CD14-positive monocyte (primary cell): ENCODE measurements at regions of chr1 and their contacts with region 1.

Region 1: GRCh38 chr1:15409388-15410222 is at the start of gene EFHD2:
- DNase-seq: peak; percentile 93 to 99 (median 97)
- H3K4me3 ChIP-seq: peak within 1 kb of the TSS; percentile 92 to 100 (median 98)
- H3K4me3 Mint-ChIP-seq: peak within 1 kb of the TSS; percentile 97
- H3K27ac ChIP-seq: peak within 1 kb of the TSS; percentile 95
- H3K27ac Mint-ChIP-seq: peak within 1 kb of the TSS; percentile 97 to 99 (median 99)
- H3K4me1 ChIP-seq: peaks cover 31 to 33% of the 10 kb centered on the region in 2 donors
- H3K4me1 Mint-ChIP-seq: peaks cover 36% of the 10 kb centered on the region
- H3K27me3 ChIP-seq: peaks cover 0 to 16% of the 10 kb centered on the region in 2 donors
- H3K27me3 Mint-ChIP-seq: peaks cover 8 to 21% (median 18%) of the 10 kb centered on the region in 3 donors
- CTCF ChIP-seq: no peak
- polyA plus RNA-seq, gene EFHD2: 314 to 329 (median 323) TPM

Region 2: GRCh38 chr1:15345711-15346355 is 63.8 kb before region 1 on chr1:
- intact Hi-C with region 1: loop called in 1 of 2 experiments (anchors 5 kb)
- DNase-seq: peak; percentile 92 to 95 (median 95)
- H3K4me3 ChIP-seq: peak overlapping the region in 1 of 3 experiments; percentile 61
- H3K4me3 Mint-ChIP-seq: peak overlapping the region; percentile 48 to 85
- H3K27ac ChIP-seq: peak overlapping the region; percentile 68 to 80
- H3K27ac Mint-ChIP-seq: peak overlapping the region; percentile 87 to 94 (median 93)
- H3K4me1 ChIP-seq: peaks cover 63 to 66% of the 10 kb centered on the region in 2 donors
- H3K4me1 Mint-ChIP-seq: peaks cover 62% of the 10 kb centered on the region
- H3K27me3 ChIP-seq: no peaks in the 10 kb centered on the region
- H3K27me3 Mint-ChIP-seq: peaks cover 2 to 17% (median 4%) of the 10 kb centered on the region in 3 donors
- CTCF ChIP-seq: no peak

Region 3: DNA sequence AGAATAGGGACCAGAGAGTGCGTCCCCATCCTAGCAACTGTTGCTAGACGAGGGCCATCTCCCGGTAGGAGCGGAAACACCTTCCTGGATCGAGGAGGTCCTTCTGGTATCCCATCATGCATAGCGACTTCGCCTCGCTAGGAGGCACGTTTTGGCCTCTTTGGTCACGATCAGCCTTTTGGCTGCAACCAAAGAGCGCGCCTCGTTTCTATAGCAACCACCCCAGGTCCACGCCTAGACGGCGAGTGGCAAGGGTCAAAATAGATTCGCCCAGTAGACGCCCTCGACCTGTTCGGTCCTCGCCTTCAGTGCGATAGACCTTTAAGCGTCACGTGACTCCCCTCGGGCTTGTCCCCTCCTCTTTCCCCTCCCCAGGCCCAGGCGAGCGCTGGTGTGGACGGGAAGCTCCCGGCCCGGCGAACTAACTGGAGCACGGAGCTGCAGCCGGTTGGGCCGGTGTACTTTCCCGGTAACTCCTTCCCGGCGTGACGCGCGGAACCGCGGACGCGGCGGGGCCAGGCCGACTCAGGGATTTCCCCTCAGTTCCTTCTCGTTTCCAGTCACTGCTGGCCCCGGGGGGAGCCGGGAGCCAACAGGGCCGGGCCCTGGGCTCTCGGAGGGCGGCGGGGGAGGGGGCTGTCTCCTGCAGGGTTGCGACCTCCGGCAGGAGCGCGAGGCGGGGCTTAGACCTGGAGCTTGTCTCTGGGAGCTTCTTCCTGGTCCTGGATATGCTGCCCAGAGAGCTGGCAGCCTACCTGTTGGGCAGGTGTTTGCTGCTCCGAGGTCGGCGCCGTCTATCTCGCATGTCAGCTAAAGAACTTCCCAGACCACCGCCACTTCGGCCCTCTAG is 117.1 kb after region 1 on chr1 and contains the start of gene DNAJC16:
- intact Hi-C with region 1: loop called in 1 of 2 experiments (anchors 5 kb)
- DNase-seq: peak; percentile 99 to 100 (median 100)
- H3K4me3 ChIP-seq: peak within 1 kb of the TSS; percentile 73 to 84 (median 77)
- H3K4me3 Mint-ChIP-seq: peak within 1 kb of the TSS; percentile 85 to 91
- H3K27ac ChIP-seq: peak within 1 kb of the TSS; percentile 80 to 88
- H3K27ac Mint-ChIP-seq: peak within 1 kb of the TSS; percentile 98 to 100 (median 99)
- H3K4me1 ChIP-seq: peaks cover 29 to 43% of the 10 kb centered on the region in 2 donors
- H3K4me1 Mint-ChIP-seq: peaks cover 42% of the 10 kb centered on the region
- H3K27me3 ChIP-seq: no peaks in the 10 kb centered on the region
- H3K27me3 Mint-ChIP-seq: peaks cover 0 to 3% (median 0%) of the 10 kb centered on the region in 3 donors
- CTCF ChIP-seq: no peak
- polyA plus RNA-seq, gene DNAJC16: 5.4 to 7.8 (median 6.3) TPM